ENCODE measurements at regions of chr9 and their contacts with region 1.

Region 1: GRCh38 chr9:5301544-5301943 is 3.0 kb downstream of the RLN2 start:
- DNase-seq: no peak
- ATAC-seq: no peak

Region 2: DNA sequence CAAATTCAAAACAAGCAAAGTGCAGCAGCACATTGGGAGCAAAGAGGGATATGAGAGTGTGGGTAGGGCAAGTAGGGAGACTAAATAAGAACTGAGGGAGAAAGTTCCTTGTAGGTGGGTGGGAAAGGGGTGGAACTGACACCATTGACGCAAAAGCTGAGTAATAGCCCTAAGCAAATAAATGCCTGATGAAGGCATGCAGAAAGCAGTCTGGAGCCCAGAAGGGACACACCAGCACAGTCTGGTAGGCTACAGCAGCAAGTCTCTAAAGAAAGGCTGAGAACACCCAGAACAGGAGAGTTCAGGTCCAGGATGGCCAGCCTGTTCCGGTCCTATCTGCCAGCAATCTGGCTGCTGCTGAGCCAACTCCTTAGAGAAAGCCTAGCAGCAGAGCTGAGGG is 70.3 kb before region 1 on chr9 and contains the start of gene INSL4:
- intact Hi-C with region 1: no loop called
- DNase-seq: no peak
- ATAC-seq: no peak
- total RNA-seq, gene INSL4: not detected

Region 3: GRCh38 chr9:5493679-5494511 is 192.4 kb after region 1 on chr9:
- intact Hi-C with region 1: loop called (anchors 5 kb)
- DNase-seq: no peak
- ATAC-seq: peak; percentile 76